CD4-positive, alpha-beta memory T cell (primary cell): ENCODE measurements at regions of chr9 and their contacts with region 1.

Region 1: GRCh38 chr9:137578518-137579258 is at the start of gene DPH7:
- DNase-seq: peak; percentile 91 to 93 (median 92)
- H3K4me3 ChIP-seq: peak within 1 kb of the TSS; percentile 47 to 86
- H3K4me3 Mint-ChIP-seq: peak within 1 kb of the TSS; percentile 78 to 87 (median 84)
- H3K27ac ChIP-seq: peak within 1 kb of the TSS; percentile 78
- H3K27ac Mint-ChIP-seq: peak within 1 kb of the TSS; percentile 22 to 85 (median 70)
- H3K4me1 ChIP-seq: peaks cover 37% of the 10 kb centered on the region
- H3K4me1 Mint-ChIP-seq: peaks cover 15 to 44% (median 27%) of the 10 kb centered on the region in 4 donors
- H3K27me3 ChIP-seq: no peaks in the 10 kb centered on the region
- H3K27me3 Mint-ChIP-seq: no peaks in the 10 kb centered on the region
- total RNA-seq, gene DPH7: 76.7 to 79.1 TPM

Region 2: GRCh38 chr9:137590462-137591383 is 12.0 kb after region 1 on chr9 and contains the start of gene ZMYND19:
- CTCF ChIA-PET with region 1: interaction called, 10 read pairs
- POLR2A ChIA-PET with region 1: interaction called, 17 read pairs
- intact Hi-C with region 1: loop called (anchors 1 kb)
- DNase-seq: peak; percentile 85 to 93 (median 91)
- H3K4me3 ChIP-seq: peak within 1 kb of the TSS; percentile 23 to 52
- H3K4me3 Mint-ChIP-seq: peak within 1 kb of the TSS; percentile 92 to 100 (median 96)
- H3K27ac ChIP-seq: peak within 1 kb of the TSS; percentile 60
- H3K27ac Mint-ChIP-seq: peak within 1 kb of the TSS; percentile 89 to 97 (median 95)
- H3K4me1 ChIP-seq: peaks cover 21% of the 10 kb centered on the region
- H3K4me1 Mint-ChIP-seq: peaks cover 5 to 24% (median 15%) of the 10 kb centered on the region in 4 donors
- H3K27me3 ChIP-seq: no peaks in the 10 kb centered on the region
- H3K27me3 Mint-ChIP-seq: no peaks in the 10 kb centered on the region
- total RNA-seq, gene ZMYND19: 26.8 to 29.1 TPM

Region 3: GRCh38 chr9:137605121-137606004 is 26.7 kb after region 1 on chr9 and contains the start of gene ARRDC1:
- CTCF ChIA-PET with region 1: interaction called, 3 read pairs
- POLR2A ChIA-PET with region 1: interaction called, 7 read pairs
- intact Hi-C with region 1: loop called (anchors 1 kb)
- DNase-seq: peak; percentile 85 to 94 (median 93)
- H3K4me3 ChIP-seq: peak within 1 kb of the TSS in 1 of 2 donors; percentile 63
- H3K4me3 Mint-ChIP-seq: peak within 1 kb of the TSS; percentile 80 to 88 (median 84)
- H3K27ac ChIP-seq: peak within 1 kb of the TSS; percentile 70
- H3K27ac Mint-ChIP-seq: peak within 1 kb of the TSS in 4 of 7 donors; percentile 52 to 75 (median 68)
- H3K4me1 ChIP-seq: peaks cover 15% of the 10 kb centered on the region
- H3K4me1 Mint-ChIP-seq: peaks cover 7 to 37% (median 20%) of the 10 kb centered on the region in 4 donors
- H3K27me3 ChIP-seq: no peaks in the 10 kb centered on the region
- H3K27me3 Mint-ChIP-seq: no peaks in the 10 kb centered on the region
- total RNA-seq, gene ARRDC1: 82.3 to 86.2 TPM